Sigmoid colon (tissue), 7 donors: ENCODE measurements at regions of chr7 and their contacts with region 1.

Region 1: GRCh38 chr7:90455163-90456030 is 14.0 kb upstream of the PTTG1IP2 start:
- DNase-seq: no peak
- H3K4me3 ChIP-seq: peak overlapping the region in 2 of 4 donors; percentile 20 to 31
- H3K27ac ChIP-seq: no peak overlapping the region
- H3K4me1 ChIP-seq: peaks cover 0 to 2% (median 0%) of the 10 kb centered on the region in 4 donors
- H3K27me3 ChIP-seq: no peaks in the 10 kb centered on the region
- CTCF ChIP-seq: peak; percentile 34 to 70 (median 64)
- EP300 ChIP-seq: no peak
- POLR2A ChIP-seq: no peak

Region 2: GRCh38 chr7:90595801-90596671 is 140.6 kb after region 1 on chr7 and contains the start of gene CDK14:
- intact Hi-C with region 1: loop called (anchors 10 kb)
- DNase-seq: peak; percentile 90
- H3K4me3 ChIP-seq: peak within 1 kb of the TSS; percentile 60 to 84 (median 70)
- H3K27ac ChIP-seq: peak within 1 kb of the TSS; percentile 79 to 86 (median 85)
- H3K4me1 ChIP-seq: peaks cover 0 to 24% (median 7%) of the 10 kb centered on the region in 4 donors
- H3K27me3 ChIP-seq: no peaks in the 10 kb centered on the region
- CTCF ChIP-seq: peak in 2 of 4 experiments; percentile 6 to 35
- EP300 ChIP-seq: no peak
- POLR2A ChIP-seq: no peak
- total RNA-seq, gene CDK14: 11.1 to 19.3 (median 16.4) TPM

Region 3: DNA sequence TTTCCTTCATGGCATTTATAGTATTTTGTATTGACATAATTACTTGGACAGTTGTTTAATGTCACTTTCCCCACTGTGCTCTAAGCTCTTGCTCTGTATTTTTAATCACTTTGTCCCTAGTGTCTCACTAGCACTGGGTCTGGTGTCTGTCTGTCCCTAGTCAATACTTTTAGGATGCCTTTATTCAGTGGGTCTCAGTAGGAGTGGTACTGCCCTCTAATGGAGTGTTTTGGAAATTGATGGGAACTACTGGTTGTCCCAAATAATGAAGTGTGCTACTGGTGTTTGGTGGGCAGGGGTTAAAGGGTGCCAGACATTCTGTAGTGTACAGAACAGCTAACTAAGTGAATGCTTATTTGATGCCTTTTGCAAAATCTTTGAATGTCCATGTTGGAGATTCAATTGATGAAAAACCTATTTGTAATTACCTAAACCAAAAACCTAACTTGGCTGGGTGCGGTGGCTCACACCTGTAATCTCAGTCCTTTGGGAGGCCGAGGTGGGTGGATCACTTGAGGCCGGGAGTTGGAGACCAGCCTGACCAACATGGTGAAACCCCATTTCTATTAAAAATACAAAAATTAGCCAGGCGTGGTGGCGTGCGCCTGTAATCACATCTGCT is 174.0 kb after region 1 on chr7:
- intact Hi-C with region 1: loop called (anchors 2 kb)
- DNase-seq: no peak
- H3K4me3 ChIP-seq: no peak overlapping the region
- H3K27ac ChIP-seq: no peak overlapping the region
- H3K4me1 ChIP-seq: peaks cover 0 to 23% (median 14%) of the 10 kb centered on the region in 4 donors
- H3K27me3 ChIP-seq: no peaks in the 10 kb centered on the region
- CTCF ChIP-seq: peak; percentile 10 to 56 (median 35)
- EP300 ChIP-seq: no peak
- POLR2A ChIP-seq: no peak